Mammary epithelial cell (primary cell): ENCODE measurements at regions of chr9 and their contacts with region 1.

Region 1: DNA sequence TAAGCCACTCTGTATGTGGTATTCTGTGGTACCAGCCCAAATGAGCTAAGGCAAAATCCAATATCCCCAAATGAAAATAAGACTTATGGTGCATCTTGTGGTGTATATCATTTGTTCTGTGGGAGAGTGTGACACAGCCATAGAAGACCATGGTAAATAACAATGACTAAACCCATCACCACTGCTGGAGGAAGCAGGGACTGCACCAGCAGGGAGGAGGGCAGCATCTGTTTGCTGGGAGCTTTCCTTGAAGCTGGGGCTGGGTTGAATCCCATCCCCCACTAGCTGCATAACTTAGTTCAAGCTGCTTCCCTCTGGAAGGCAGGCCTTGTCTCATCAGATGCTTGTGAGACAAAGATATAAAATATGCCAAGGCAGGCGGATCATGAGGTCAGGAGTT is 14.2 kb downstream of the GADD45G start:
- DNase-seq: no peak
- H3K4me3 ChIP-seq: no peak overlapping the region
- H3K27ac ChIP-seq: no peak overlapping the region
- H3K4me1 ChIP-seq: no peaks in the 10 kb centered on the region
- H3K27me3 ChIP-seq: no peaks in the 10 kb centered on the region
- CTCF ChIP-seq: no peak

Region 2: DNA sequence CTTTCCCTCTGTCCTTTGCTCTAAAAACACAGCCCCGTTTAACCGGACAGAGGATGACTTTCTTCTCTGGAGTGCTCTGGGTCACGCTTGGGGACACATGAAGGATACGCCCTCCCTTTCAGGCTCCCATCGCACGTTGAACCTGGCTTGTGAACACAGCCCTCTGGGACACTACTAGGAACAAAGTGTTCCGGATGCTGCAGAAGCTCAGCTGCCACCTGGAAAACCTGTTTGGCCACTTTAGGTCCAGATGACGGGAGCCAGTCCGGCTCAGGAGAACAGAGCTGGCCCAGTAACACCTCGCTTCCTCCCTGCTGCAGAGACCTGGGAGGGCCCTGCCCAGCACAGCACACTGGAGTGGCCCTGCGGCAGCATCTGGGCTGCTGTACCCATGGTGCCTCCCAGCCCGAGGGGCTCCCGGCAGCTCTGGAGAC is 45.9 kb after region 1 on chr9:
- CTCF ChIA-PET with region 1: no interaction called
- dilution Hi-C with region 1: loop called (anchors 5 kb)
- in situ Hi-C with region 1: no loop called
- intact Hi-C with region 1: no loop called
- DNase-seq: peak; percentile 37
- H3K4me3 ChIP-seq: no peak overlapping the region
- H3K27ac ChIP-seq: no peak overlapping the region
- H3K4me1 ChIP-seq: peaks cover 5% of the 10 kb centered on the region
- H3K27me3 ChIP-seq: no peaks in the 10 kb centered on the region
- CTCF ChIP-seq: no peak

Region 3: DNA sequence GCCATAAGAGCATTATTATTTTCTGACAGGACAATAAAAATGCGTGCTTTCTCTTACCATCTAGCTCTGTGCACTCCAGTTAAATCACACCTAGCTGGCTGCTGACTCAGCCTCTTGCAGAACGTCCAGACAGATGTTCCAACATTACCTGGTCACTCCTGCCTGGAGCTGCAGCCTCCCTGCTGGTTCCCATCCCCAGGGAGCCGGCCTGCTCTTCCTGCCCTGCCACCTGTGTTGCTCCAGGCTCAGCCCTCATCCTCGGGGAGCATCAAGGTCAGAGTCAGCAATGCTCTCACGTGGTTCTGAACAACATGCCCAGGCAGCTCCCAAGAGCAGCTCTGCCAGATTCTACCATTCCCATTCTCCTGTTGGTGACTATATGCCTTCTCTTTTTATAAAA is 67.1 kb after region 1 on chr9:
- CTCF ChIA-PET with region 1: interaction called, 10 read pairs
- dilution Hi-C with region 1: no loop called
- in situ Hi-C with region 1: no loop called
- intact Hi-C with region 1: no loop called
- DNase-seq: peak; percentile 95
- H3K4me3 ChIP-seq: no peak overlapping the region
- H3K27ac ChIP-seq: peak overlapping the region; percentile 41
- H3K4me1 ChIP-seq: peaks cover 17% of the 10 kb centered on the region
- H3K27me3 ChIP-seq: no peaks in the 10 kb centered on the region
- CTCF ChIP-seq: peak in 1 of 2 donors; percentile 17

Region 4: DNA sequence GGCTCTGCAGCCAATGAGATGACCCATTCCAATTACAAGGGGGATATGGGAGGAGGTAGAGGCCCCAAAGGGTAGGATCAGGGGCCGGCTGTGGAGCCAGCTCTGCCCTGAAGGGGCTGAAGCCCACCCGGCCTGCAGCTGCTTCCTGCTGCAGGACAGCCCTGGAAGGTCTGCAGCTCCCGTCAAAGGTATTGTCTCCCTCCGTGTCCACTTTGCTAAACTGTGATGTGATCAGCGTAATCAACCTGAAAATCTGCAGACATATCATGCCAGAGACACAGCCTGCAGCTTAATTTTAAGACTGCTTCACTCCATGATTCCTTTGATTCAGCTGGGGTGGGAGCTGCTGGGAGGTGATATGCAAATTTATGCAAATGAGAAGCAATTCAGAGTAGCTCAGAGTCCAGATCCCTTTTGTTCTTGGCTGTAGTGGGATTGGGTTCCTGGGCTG is 76.4 kb after region 1 on chr9:
- CTCF ChIA-PET with region 1: no interaction called
- dilution Hi-C with region 1: loop called (anchors 5 kb)
- in situ Hi-C with region 1: no loop called
- intact Hi-C with region 1: no loop called
- DNase-seq: no peak
- H3K4me3 ChIP-seq: no peak overlapping the region
- H3K27ac ChIP-seq: no peak overlapping the region
- H3K4me1 ChIP-seq: no peaks in the 10 kb centered on the region
- H3K27me3 ChIP-seq: peaks cover 3% of the 10 kb centered on the region
- CTCF ChIP-seq: no peak

Region 5: GRCh38 chr9:89755821-89756220 is 136.8 kb after region 1 on chr9:
- CTCF ChIA-PET with region 1: no interaction called
- dilution Hi-C with region 1: no loop called
- in situ Hi-C with region 1: no loop called
- intact Hi-C with region 1: no loop called
- DNase-seq: peak; percentile 35
- H3K4me3 ChIP-seq: no peak overlapping the region
- H3K27ac ChIP-seq: no peak overlapping the region
- H3K4me1 ChIP-seq: no peaks in the 10 kb centered on the region
- H3K27me3 ChIP-seq: no peaks in the 10 kb centered on the region
- CTCF ChIP-seq: no peak